ENCODE measurements at regions of chr11 and their contacts with region 1.

Region 1: GRCh38 chr11:73047773-73048371 is 94.2 kb downstream of the FCHSD2 start:
- DNase-seq: peak in 1 of 9 experiments; percentile 16
- ATAC-seq: no peak
- H3K4me3 ChIP-seq: no peak overlapping the region
- H3K4me3 Mint-ChIP-seq: peak overlapping the region; percentile 59
- H3K27ac ChIP-seq: peak overlapping the region in 1 of 2 experiments; percentile 20
- H3K27ac Mint-ChIP-seq: peak overlapping the region; percentile 56
- H3K4me1 ChIP-seq: peaks cover 13% of the 10 kb centered on the region
- H3K4me1 Mint-ChIP-seq: peaks cover 28% of the 10 kb centered on the region
- H3K27me3 ChIP-seq: no peaks in the 10 kb centered on the region
- H3K27me3 Mint-ChIP-seq: no peaks in the 10 kb centered on the region
- CTCF ChIP-seq: no peak

Region 2: DNA sequence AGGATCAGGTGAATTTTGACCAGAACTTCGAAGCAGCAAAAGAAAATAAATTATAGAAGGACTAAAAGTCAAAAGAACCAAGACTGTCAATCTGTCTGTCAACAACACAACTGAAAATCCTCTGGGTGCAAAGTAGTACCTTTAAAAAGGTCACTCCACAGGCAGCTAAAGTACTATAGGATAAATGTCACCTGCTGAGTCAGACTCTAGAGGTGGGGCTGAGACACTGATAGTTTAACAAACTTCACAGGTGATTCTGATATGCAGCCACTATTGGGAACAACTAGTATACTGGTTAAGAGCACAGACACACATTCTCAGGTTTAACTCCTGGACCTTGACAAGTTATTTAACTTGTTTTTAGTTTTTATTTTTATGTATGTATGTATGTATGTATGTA is 13.1 kb before region 1 on chr11:
- CTCF ChIA-PET with region 1: no interaction called
- POLR2A ChIA-PET with region 1: no interaction called
- intact Hi-C with region 1: loop called in 1 of 2 experiments (anchors 2 kb)
- DNase-seq: peak in 1 of 9 experiments; percentile 10
- ATAC-seq: peak; percentile 62
- H3K4me3 ChIP-seq: no peak overlapping the region
- H3K4me3 Mint-ChIP-seq: peak overlapping the region; percentile 63
- H3K27ac ChIP-seq: no peak overlapping the region
- H3K27ac Mint-ChIP-seq: peak overlapping the region; percentile 84
- H3K4me1 ChIP-seq: peaks cover 28% of the 10 kb centered on the region
- H3K4me1 Mint-ChIP-seq: peaks cover 41% of the 10 kb centered on the region
- H3K27me3 ChIP-seq: no peaks in the 10 kb centered on the region
- H3K27me3 Mint-ChIP-seq: no peaks in the 10 kb centered on the region
- CTCF ChIP-seq: no peak

Region 3: DNA sequence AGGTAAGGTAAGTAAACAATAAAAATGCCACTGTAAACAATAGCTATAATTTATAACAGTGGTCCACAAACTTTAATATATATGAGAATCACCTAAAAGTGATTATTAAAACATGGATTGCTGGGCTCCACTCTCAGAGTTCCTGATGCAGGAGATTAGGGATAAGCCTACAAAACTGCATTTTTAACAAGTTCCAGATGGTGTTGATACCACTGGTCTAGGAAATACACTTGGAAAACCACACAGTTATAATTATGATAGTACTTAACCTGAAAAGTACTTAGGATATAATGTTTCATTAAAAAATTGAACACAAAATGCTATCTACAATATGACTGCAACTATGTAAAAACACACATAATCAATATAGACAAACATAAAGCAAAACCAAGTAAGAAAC is 73.8 kb after region 1 on chr11:
- CTCF ChIA-PET with region 1: no interaction called
- POLR2A ChIA-PET with region 1: no interaction called
- intact Hi-C with region 1: loop called in 1 of 2 experiments (anchors 2 kb)
- DNase-seq: no peak
- ATAC-seq: no peak
- H3K4me3 ChIP-seq: no peak overlapping the region
- H3K4me3 Mint-ChIP-seq: no peak overlapping the region
- H3K27ac ChIP-seq: no peak overlapping the region
- H3K27ac Mint-ChIP-seq: no peak overlapping the region
- H3K4me1 ChIP-seq: no peaks in the 10 kb centered on the region
- H3K4me1 Mint-ChIP-seq: peaks cover 18% of the 10 kb centered on the region
- H3K27me3 ChIP-seq: no peaks in the 10 kb centered on the region
- H3K27me3 Mint-ChIP-seq: no peaks in the 10 kb centered on the region
- CTCF ChIP-seq: no peak